ENCODE measurements at regions of chr7 and their contacts with region 1.

Region 1: DNA sequence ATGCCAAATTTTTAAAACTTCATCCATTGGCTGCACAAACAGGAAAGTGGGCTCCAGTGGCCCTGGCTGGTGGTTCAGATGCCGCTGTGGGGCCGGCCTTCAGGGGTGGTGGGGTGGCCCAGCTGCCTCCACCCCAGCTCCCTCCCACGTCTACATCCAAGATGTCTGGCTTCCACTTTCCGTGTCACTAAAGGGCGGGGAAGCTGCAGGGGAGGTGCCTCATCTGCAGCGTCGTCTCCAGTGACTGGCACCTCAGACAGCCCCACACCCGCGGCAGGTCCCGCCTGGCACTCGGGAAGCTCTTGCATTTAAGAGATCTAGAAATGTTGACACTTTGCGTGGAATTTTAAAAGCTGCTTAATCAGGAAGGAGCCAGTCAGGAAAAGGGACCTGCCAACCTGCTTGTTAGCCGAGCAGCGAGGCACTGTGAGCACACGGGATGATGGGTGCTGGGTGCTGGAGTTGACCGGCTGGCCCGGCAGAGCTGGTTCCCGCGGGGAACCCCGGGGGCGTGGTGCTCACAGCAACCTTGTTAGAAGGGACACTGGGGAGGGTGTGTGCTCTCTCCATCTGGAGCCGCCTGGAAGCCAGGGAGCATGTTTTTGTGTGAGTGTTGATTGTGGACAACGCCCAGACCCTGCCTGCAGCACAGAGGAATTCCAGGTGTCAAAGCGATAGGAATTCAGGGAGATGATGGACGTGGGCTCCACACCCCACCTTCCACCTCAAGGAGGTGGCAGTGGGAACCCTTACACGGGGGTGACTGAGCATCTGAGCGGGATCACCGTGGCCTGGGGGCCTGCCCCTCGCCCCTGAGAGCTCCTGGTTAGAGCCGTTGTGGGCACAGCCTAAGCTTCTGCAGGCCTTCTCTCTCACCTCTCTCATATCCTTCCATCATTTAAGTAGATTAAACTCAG is 320.5 kb downstream of the PTPRN2 start:
- DNase-seq: no peak
- ATAC-seq: 0 out of 2 replicates have a peak, but pooled peaks have one; percentile 18
- H3K4me3 ChIP-seq: no peak overlapping the region
- H3K27ac ChIP-seq: no peak overlapping the region
- H3K4me1 ChIP-seq: no peaks in the 10 kb centered on the region
- H3K27me3 ChIP-seq: no peaks in the 10 kb centered on the region; the same call in 1 of the 2 replicates
- CTCF ChIP-seq: no peak

Region 2: DNA sequence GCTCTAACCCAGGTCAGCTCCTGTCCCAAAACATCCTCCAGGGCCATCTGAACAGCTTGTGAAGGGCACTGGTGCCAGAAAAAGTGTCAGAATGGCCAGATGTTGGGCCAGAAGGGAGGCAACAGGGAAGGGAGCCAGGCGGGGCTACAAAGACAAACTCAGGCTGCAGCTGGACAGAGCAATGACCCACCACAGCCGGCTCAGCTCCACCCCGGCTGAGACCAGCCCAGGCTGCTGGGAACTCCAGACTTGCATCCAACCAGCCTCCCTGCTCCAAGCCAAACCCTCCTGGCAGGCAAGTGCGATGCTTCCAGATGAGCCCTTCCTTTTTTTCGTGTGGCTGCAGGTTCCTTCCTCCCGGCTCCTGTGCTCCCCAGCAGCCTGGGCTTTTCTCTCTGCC is 146.4 kb before region 1 on chr7:
- CTCF ChIA-PET with region 1: no interaction called
- POLR2A ChIA-PET with region 1: interaction called, 10 read pairs
- in situ Hi-C with region 1: no loop called
- intact Hi-C with region 1: no loop called
- DNase-seq: no peak
- ATAC-seq: no peak
- H3K4me3 ChIP-seq: no peak overlapping the region
- H3K27ac ChIP-seq: no peak overlapping the region
- H3K4me1 ChIP-seq: no peaks in the 10 kb centered on the region
- H3K27me3 ChIP-seq: no peaks in the 10 kb centered on the region
- CTCF ChIP-seq: no peak

Region 3: DNA sequence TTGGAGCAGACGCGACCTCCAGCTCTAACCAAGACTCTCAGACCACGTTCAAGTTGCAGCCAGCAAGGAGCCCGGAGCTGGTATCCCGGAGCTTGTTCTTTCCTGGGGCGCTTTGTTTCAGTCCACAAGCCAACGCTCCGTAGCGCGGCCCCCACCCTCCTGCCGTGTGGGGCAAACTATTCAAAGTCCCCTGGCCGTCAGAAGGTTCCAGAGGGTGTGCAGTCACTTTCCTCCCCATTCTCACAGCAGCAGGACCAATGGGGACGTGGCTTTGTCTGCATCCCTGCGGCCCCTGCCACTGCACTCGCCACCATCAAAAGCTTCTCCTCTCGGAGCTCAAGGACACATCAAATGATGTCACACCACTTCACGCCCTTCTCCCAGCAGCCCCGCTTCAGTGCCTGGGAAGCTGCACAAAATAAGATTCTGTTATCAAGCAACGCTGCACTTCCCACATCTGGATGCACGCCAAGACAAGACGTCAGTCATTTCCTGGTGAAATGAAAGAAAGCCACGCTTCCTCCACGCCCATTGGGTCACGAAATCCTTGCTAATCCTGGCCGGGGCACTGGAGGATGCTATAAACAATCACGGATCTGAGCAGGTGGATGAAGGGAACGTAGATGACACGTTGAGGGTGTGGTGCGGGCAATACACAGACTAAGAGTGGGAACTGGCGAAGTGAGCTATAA is 27.6 kb before region 1 on chr7:
- CTCF ChIA-PET with region 1: no interaction called
- POLR2A ChIA-PET with region 1: no interaction called
- in situ Hi-C with region 1: no loop called
- intact Hi-C with region 1: no loop called
- DNase-seq: no peak
- ATAC-seq: 0 out of 2 replicates have a peak, but pooled peaks have one; percentile 48
- H3K4me3 ChIP-seq: no peak overlapping the region
- H3K27ac ChIP-seq: no peak overlapping the region
- H3K4me1 ChIP-seq: no peaks in the 10 kb centered on the region
- H3K27me3 ChIP-seq: peaks cover 8% of the 10 kb centered on the region
- CTCF ChIP-seq: no peak